ENCODE measurements at regions of chr17 and their contacts with region 1.

Region 1: GRCh38 chr17:66343531-66344078 is 41.2 kb downstream of the PRKCA start:
- DNase-seq: peak; percentile 84
- ATAC-seq: no peak
- H3K4me3 ChIP-seq: no peak overlapping the region
- H3K27ac ChIP-seq: no peak overlapping the region
- H3K4me1 ChIP-seq: peaks cover 95% of the 10 kb centered on the region
- H3K27me3 ChIP-seq: no peaks in the 10 kb centered on the region
- CTCF ChIP-seq: no peak
- EP300 ChIP-seq: peak in 1 of 2 experiments; percentile 61; a peak in 1 of 4 replicates
- POLR2A ChIP-seq: no peak
- RAD21 ChIP-seq: no peak

Region 2: GRCh38 chr17:65485376-65486299 is 858.0 kb before region 1 on chr17:
- CTCF ChIA-PET with region 1: no interaction called
- POLR2A ChIA-PET with region 1: no interaction called
- in situ Hi-C with region 1: no loop called
- intact Hi-C with region 1: no loop called
- DNase-seq: no peak
- ATAC-seq: no peak
- H3K4me3 ChIP-seq: no peak overlapping the region
- H3K27ac ChIP-seq: no peak overlapping the region
- H3K4me1 ChIP-seq: peaks cover 10% of the 10 kb centered on the region
- H3K27me3 ChIP-seq: peaks cover 1 to 3% of the 10 kb centered on the region in 2 experiments; a peak in 2 of 5 replicates
- CTCF ChIP-seq: no peak
- EP300 ChIP-seq: no peak
- POLR2A ChIP-seq: no peak
- RAD21 ChIP-seq: no peak

Region 3: GRCh38 chr17:66290101-66290722 is 53.4 kb before region 1 on chr17:
- CTCF ChIA-PET with region 1: no interaction called
- POLR2A ChIA-PET with region 1: no interaction called
- in situ Hi-C with region 1: no loop called
- intact Hi-C with region 1: no loop called
- DNase-seq: peak; percentile 53
- ATAC-seq: peak; percentile 90
- H3K4me3 ChIP-seq: no peak overlapping the region
- H3K27ac ChIP-seq: no peak overlapping the region
- H3K4me1 ChIP-seq: peaks cover 23% of the 10 kb centered on the region
- H3K27me3 ChIP-seq: no peaks in the 10 kb centered on the region
- CTCF ChIP-seq: peak; percentile 70
- EP300 ChIP-seq: no peak
- POLR2A ChIP-seq: no peak
- RAD21 ChIP-seq: peak; percentile 67

Region 4: DNA sequence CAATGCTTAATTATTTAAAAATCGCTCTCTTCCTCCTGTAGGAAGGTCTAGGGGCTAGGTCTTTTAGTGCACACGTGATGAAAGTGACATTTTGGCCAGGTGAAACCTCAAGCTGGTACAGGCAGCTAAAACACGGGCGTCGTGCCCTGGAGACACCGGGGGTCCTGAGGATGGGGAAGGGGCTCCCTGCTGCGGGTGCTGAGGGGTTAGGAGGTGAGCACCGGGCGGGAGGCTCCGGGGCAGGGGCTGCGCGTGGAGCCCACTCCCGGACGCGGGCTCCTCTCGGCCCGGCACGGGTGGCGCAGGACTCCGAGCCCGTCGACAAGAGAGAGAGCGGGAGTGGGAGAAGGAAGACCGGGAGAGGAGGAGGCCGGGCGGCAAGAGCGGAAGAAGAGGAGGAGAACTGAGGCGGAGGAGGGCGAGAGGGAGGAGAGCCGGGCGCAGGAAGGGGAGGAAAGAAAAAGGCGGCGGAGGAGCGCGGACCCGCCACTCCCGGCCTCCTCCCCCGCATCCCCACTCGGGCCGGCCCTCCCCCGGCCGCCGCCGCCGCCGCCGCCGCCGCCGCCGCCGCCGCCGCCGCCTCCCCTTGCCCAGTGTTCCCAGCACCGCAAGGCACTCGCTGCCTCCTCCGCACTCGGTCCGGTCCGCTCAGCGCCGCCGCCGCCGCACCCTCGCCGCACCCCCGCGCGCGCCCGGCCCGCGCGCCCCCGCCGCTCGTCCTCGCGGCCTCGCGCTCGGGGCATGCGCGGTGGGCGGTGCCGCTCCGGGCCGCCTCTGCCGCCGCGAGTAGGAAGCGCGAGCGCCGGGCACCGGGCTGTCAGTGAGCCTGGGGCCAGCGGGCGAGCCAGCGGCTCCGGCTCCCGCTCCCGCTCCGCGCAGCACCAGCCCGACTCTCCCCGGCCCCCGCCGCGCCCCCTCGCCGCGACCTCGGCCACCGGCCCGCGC is 41.5 kb before region 1 on chr17 and contains the start of gene PRKCA:
- CTCF ChIA-PET with region 1: no interaction called
- POLR2A ChIA-PET with region 1: interaction called, 3 read pairs
- in situ Hi-C with region 1: no loop called
- intact Hi-C with region 1: loop called (anchors 5 kb)
- DNase-seq: peak; percentile 54
- ATAC-seq: peak; percentile 60
- H3K4me3 ChIP-seq: peak within 1 kb of the TSS; percentile 88 to 95 (median 91)
- H3K27ac ChIP-seq: peak within 1 kb of the TSS; percentile 61
- H3K4me1 ChIP-seq: peaks cover 32% of the 10 kb centered on the region
- H3K27me3 ChIP-seq: no peaks in the 10 kb centered on the region
- CTCF ChIP-seq: no peak
- EP300 ChIP-seq: no peak
- POLR2A ChIP-seq: peak; percentile 91 to 97
- RAD21 ChIP-seq: no peak; the same call in 1 of the 2 replicates
- total RNA-seq, gene PRKCA: 18.5 and 24.4 TPM in 2 replicates

Region 5: GRCh38 chr17:66386498-66387365 is 43.1 kb after region 1 on chr17:
- CTCF ChIA-PET with region 1: no interaction called
- POLR2A ChIA-PET with region 1: no interaction called
- in situ Hi-C with region 1: no loop called
- intact Hi-C with region 1: loop called (anchors 5 kb)
- DNase-seq: peak; percentile 85
- ATAC-seq: peak; percentile 88
- H3K4me3 ChIP-seq: no peak overlapping the region
- H3K27ac ChIP-seq: peak overlapping the region; percentile 51
- H3K4me1 ChIP-seq: peaks cover 31% of the 10 kb centered on the region
- H3K27me3 ChIP-seq: no peaks in the 10 kb centered on the region
- CTCF ChIP-seq: no peak
- EP300 ChIP-seq: peak in 1 of 2 experiments; percentile 75; a peak in 1 of 4 replicates
- POLR2A ChIP-seq: no peak
- RAD21 ChIP-seq: no peak

Measured in HepG2 (cell line).